ENCODE measurements at regions of chr7 and their contacts with region 1.

Region 1: DNA sequence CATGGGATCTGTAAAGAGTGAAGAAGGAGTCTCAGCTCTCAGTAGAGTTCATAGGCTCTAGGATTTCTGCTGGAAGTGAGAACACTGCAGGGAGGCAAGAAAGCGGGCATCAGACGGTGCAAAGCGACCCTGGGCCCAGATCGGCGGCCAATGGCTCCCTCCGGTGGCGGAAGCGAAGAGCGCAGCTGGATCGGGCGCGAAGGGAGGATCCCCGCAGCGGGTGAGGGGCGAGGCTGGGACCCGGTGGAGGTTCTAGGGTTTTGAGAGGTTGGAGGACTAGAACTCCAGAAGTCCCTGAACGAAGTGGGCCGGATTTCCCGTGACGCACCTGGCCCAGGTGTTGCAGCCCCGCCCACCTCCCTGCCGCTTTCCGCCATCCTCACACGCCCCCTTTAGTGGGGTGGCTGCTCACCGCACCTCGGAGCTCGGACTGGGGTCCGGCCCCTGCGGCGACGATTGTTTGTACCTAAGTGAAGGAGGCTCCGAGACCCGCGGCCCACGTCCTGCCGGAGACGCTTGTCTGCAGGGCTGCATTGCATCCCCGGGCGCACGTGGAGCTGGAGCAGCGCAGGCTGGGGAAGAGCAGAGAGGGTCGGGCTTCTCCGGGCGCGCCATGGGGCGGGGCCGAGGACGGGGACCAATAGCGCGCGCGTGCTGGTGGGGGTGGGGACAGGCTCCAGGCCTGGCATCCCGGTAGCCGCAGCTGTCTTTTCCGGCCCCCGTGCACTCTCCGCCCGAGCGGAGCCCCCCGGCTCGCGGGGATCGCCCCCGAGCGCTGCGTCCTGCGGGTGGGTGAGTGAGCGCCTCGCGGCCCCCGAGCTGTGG is at the start of gene SLC12A9:
- DNase-seq: peak; percentile 88
- H3K4me3 ChIP-seq: peak within 1 kb of the TSS; percentile 52 to 58
- H3K27ac ChIP-seq: peak within 1 kb of the TSS; percentile 28 to 33
- H3K4me1 ChIP-seq: no peaks in the 10 kb centered on the region
- H3K27me3 ChIP-seq: no peaks in the 10 kb centered on the region
- CTCF ChIP-seq: peak; percentile 74 to 96 (median 94)
- POLR2A ChIP-seq: peak; percentile 54
- total RNA-seq, gene SLC12A9: 22.0 to 29.4 TPM

Region 2: DNA sequence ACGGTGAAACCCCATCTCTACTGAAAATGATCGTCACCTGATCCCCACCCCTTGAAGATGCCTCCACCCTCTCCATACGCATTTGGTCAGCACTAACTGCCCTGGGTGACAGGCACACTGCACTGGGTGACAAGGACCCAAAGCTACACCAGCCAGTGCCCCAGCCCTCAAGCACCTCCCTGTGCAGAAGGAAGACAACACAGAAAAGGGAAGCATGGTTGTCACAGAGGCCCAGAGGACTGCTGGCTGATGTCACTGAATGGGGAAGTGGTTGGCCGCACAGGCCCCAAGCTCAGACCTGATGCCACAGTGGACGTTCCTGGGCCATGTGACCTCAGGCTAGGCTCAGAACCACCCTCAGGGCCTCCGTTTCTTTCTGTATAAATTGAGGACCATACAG is 483.2 kb before region 1 on chr7:
- intact Hi-C with region 1: no loop called
- DNase-seq: no peak
- H3K4me3 ChIP-seq: no peak overlapping the region
- H3K27ac ChIP-seq: no peak overlapping the region
- H3K4me1 ChIP-seq: no peaks in the 10 kb centered on the region
- H3K27me3 ChIP-seq: no peaks in the 10 kb centered on the region
- CTCF ChIP-seq: no peak
- POLR2A ChIP-seq: no peak

Region 3: GRCh38 chr7:100705753-100706671 is 146.2 kb before region 1 on chr7 and contains the start of gene POP7:
- intact Hi-C with region 1: loop called (anchors 2 kb)
- DNase-seq: peak; percentile 98
- H3K4me3 ChIP-seq: peak within 1 kb of the TSS; percentile 75 to 84
- H3K27ac ChIP-seq: peak within 1 kb of the TSS; percentile 94 to 96
- H3K4me1 ChIP-seq: peaks cover 6% of the 10 kb centered on the region
- H3K27me3 ChIP-seq: no peaks in the 10 kb centered on the region
- CTCF ChIP-seq: no peak
- POLR2A ChIP-seq: peak; percentile 68
- total RNA-seq, gene POP7: 41.4 to 45.2 TPM

Region 4: GRCh38 chr7:100719523-100720319 is 132.5 kb before region 1 on chr7:
- intact Hi-C with region 1: loop called (anchors 5 kb)
- DNase-seq: no peak
- H3K4me3 ChIP-seq: no peak overlapping the region
- H3K27ac ChIP-seq: no peak overlapping the region
- H3K4me1 ChIP-seq: no peaks in the 10 kb centered on the region
- H3K27me3 ChIP-seq: no peaks in the 10 kb centered on the region
- CTCF ChIP-seq: no peak
- POLR2A ChIP-seq: no peak

Region 5: GRCh38 chr7:100789055-100789454 is 63.2 kb before region 1 on chr7:
- intact Hi-C with region 1: no loop called
- DNase-seq: no peak
- H3K4me3 ChIP-seq: no peak overlapping the region
- H3K27ac ChIP-seq: no peak overlapping the region
- H3K4me1 ChIP-seq: no peaks in the 10 kb centered on the region
- H3K27me3 ChIP-seq: no peaks in the 10 kb centered on the region
- CTCF ChIP-seq: no peak
- POLR2A ChIP-seq: no peak

Region 6: DNA sequence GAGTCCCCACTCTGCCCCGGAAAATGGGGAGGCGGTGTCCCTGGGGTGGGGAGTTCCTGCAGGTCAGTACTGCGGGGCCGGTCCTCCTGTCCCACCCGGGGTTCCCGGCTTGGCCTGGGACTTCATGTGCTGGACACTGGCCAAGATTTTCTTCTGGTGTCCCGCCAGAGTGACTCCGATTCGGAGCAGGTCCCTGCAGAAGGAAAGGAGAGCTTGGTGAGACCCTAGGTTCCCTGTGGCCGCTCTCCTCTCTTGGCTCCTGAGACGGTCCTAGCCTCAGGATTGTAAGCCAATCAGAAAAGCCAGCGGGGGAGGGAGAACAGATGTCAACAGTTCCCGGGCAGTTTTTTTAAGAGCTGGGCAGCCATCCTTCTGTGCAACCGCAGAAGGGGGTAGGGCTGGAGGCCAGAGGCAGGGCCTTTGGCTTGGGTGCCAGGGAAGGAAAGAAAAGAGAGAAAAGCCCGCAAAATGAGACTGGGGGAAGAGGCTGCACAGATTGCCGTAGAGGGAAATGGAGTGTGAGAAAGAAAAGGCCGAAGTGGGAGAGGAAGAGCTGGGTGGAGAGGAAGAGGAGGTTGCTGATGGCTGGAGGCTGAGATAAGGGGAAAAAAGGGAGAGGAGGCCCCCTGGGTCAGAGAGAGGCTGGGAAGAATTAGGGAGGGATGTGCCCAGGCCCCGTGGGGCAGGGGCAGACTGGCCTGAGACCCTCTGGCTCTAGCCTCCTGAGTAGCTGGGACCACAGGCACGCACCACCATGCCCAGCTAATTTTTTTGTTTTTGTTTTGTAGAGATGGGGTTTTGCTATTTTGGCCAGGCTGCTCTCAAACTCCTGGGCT is 48.6 kb before region 1 on chr7:
- intact Hi-C with region 1: loop called (anchors 2 kb)
- DNase-seq: peak; percentile 93
- H3K4me3 ChIP-seq: no peak overlapping the region
- H3K27ac ChIP-seq: peak overlapping the region; percentile 81 to 82
- H3K4me1 ChIP-seq: peaks cover 12% of the 10 kb centered on the region
- H3K27me3 ChIP-seq: no peaks in the 10 kb centered on the region
- CTCF ChIP-seq: no peak
- POLR2A ChIP-seq: peak; percentile 55